ENCODE measurements at regions of chr1 and their contacts with region 1.

Region 1: GRCh38 chr1:231027136-231027925 is 12.7 kb downstream of the FAM89A start:
- DNase-seq: no peak

Region 2: GRCh38 chr1:230972855-230973271 is 54.5 kb before region 1 on chr1:
- intact Hi-C with region 1: no loop called
- DNase-seq: no peak

Region 3: DNA sequence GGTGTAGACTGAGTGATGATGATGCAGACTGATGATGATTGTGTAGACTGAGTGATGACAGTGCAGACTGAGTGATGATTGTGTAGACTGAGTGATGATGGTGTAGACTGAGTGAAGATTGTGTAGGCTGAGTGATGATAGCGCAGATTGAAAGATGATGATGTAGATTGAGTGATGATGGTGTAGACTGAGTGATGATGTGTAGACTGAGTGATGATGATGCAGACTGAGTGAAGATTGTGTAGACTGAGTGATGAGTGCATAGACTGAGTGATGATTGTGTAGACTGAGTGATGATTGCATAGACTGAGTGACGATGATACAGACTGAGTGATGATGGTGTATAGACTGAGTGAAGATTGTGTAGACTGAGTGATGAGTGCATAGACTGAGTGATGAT is 16.0 kb before region 1 on chr1:
- intact Hi-C with region 1: loop called in 1 of 2 experiments (anchors 1 kb)
- DNase-seq: no peak

Region 4: GRCh38 chr1:231899713-231900440 is 872.5 kb after region 1 on chr1:
- intact Hi-C with region 1: no loop called
- DNase-seq: no peak